Caco-2 (cell line): ENCODE measurements at regions of chr4 and their contacts with region 1.

Region 1: GRCh38 chr4:26141911-26142638 is 178.7 kb upstream of the RBPJ start:
- DNase-seq: no peak
- H3K4me3 ChIP-seq: no peak overlapping the region
- H3K4me3 Mint-ChIP-seq: no peak overlapping the region
- H3K27ac Mint-ChIP-seq: no peak overlapping the region
- H3K4me1 ChIP-seq: peaks cover 15% of the 10 kb centered on the region
- H3K4me1 Mint-ChIP-seq: peaks cover 19% of the 10 kb centered on the region
- H3K27me3 ChIP-seq: no peaks in the 10 kb centered on the region
- H3K27me3 Mint-ChIP-seq: no peaks in the 10 kb centered on the region
- CTCF ChIP-seq: no peak

Region 2: DNA sequence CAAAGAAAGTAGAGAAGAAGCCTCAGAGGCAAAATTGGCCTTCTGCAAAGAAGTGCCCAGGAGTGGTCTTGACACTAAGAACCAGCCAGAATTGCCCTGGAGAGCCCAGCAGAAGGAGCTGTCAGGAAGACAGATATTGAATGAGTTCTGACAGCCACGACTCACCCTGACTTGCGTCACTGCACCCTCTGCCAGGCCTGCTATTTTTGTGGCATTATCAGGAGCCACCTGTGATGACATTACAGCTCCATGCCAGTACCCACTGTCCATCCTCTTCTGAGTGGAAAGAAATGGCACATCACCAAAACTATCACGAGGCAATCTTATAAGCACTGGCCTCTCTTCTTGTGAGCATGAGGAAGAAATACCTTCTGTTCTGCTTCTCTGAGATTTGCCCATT is 160.3 kb before region 1 on chr4:
- CTCF ChIA-PET with region 1: no interaction called
- POLR2A ChIA-PET with region 1: no interaction called
- intact Hi-C with region 1: loop called (anchors 10 kb)
- DNase-seq: no peak
- H3K4me3 ChIP-seq: no peak overlapping the region
- H3K4me3 Mint-ChIP-seq: no peak overlapping the region
- H3K27ac Mint-ChIP-seq: no peak overlapping the region
- H3K4me1 ChIP-seq: no peaks in the 10 kb centered on the region
- H3K4me1 Mint-ChIP-seq: no peaks in the 10 kb centered on the region
- H3K27me3 ChIP-seq: no peaks in the 10 kb centered on the region
- H3K27me3 Mint-ChIP-seq: no peaks in the 10 kb centered on the region
- CTCF ChIP-seq: no peak

Region 3: GRCh38 chr4:26116092-26116491 is 26.0 kb before region 1 on chr4:
- CTCF ChIA-PET with region 1: no interaction called
- POLR2A ChIA-PET with region 1: no interaction called
- intact Hi-C with region 1: no loop called
- DNase-seq: no peak
- H3K4me3 ChIP-seq: no peak overlapping the region
- H3K4me3 Mint-ChIP-seq: no peak overlapping the region
- H3K27ac Mint-ChIP-seq: no peak overlapping the region
- H3K4me1 ChIP-seq: 0 out of 2 replicates have a peak, but pooled peaks cover 3% of the 10 kb centered on the region
- H3K4me1 Mint-ChIP-seq: no peaks in the 10 kb centered on the region
- H3K27me3 ChIP-seq: no peaks in the 10 kb centered on the region
- H3K27me3 Mint-ChIP-seq: peaks cover 2% of the 10 kb centered on the region
- CTCF ChIP-seq: no peak

Region 4: DNA sequence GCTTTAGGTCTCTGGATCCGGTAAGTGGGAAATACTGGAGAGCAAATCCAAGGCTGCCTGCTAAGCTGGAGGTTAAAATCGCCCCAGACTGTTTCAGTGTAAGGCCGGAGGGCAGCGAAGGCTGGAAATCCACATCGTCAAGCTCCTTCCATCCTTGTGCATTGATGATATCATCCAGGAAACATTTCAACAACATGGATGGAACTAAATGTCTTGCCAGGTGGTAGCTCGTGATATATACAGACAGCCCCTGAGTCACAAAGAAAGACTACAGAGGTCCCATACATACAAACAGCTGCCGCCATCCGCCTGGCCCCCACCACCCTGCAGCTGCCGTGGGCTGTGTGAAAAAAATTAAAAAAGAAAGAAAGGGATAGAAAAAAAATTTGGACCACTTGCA is 29.9 kb after region 1 on chr4:
- CTCF ChIA-PET with region 1: no interaction called
- POLR2A ChIA-PET with region 1: no interaction called
- intact Hi-C with region 1: loop called (anchors 2 kb)
- DNase-seq: no peak
- H3K4me3 ChIP-seq: no peak overlapping the region
- H3K4me3 Mint-ChIP-seq: no peak overlapping the region
- H3K27ac Mint-ChIP-seq: no peak overlapping the region
- H3K4me1 ChIP-seq: peaks cover 28% of the 10 kb centered on the region
- H3K4me1 Mint-ChIP-seq: peaks cover 8% of the 10 kb centered on the region
- H3K27me3 ChIP-seq: no peaks in the 10 kb centered on the region
- H3K27me3 Mint-ChIP-seq: no peaks in the 10 kb centered on the region
- CTCF ChIP-seq: no peak